ENCODE measurements at regions of chr3 and their contacts with region 1.

Region 1: GRCh38 chr3:25021816-25022215 is 406.2 kb upstream of the RARB start:
- DNase-seq: no peak
- ATAC-seq: peak; percentile 61 to 65

Region 2: GRCh38 chr3:23685484-23686258 is 1336.1 kb before region 1 on chr3:
- intact Hi-C with region 1: no loop called
- DNase-seq: peak; percentile 82
- ATAC-seq: peak; percentile 92 to 99

Region 3: DNA sequence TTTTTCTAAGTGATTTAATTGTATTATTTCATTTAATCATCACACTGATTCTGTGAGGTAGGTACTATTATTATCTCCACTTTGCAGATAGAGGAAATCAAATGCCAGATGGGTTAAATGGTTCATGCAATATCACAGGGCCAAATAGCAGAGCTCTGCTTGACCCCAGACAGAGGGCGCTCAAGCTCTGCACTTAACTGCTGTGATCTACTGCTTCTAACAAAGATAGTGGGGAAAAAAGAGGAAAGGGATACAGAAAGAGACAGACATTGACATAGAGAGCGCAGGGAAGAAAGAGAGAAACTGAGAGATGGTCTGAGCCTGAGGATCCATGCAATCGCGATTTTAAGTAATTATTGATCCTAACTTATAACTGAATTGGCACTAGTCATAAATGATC is 248.0 kb before region 1 on chr3:
- intact Hi-C with region 1: loop called in 1 of 2 experiments (anchors 10 kb)
- DNase-seq: peak; percentile 48
- ATAC-seq: peak; percentile 74 to 82

Measured in left cardiac atrium (tissue), 4 donors.